Left colon (tissue), 2 donors: ENCODE measurements at regions of chr9 and their contacts with region 1.

Region 1: GRCh38 chr9:72280913-72281500 is 84.0 kb downstream of the ZFAND5 start:
- DNase-seq: peak; percentile 45 to 75
- ATAC-seq: peak; percentile 87

Region 2: DNA sequence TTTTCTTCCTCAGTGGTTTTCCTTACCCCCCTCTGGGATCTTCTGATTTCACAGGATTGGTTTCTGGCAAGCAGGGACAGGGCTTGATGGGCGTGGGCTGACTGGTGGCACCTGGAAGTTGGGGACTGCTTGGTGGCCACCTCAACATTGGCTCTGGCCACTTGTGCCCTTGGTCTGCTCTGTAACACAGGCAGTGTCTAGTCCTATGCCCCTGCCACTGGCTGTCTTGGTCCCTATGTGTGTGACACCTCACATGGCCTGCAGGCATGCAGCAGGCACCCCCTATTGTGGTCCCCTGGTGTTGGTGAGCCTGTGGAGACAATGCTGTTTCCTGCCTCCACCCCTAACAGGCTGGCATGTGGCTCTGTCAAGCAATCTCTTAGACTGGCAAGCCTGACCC is 60.4 kb before region 1 on chr9:
- intact Hi-C with region 1: no loop called
- DNase-seq: no peak
- ATAC-seq: no peak

Region 3: DNA sequence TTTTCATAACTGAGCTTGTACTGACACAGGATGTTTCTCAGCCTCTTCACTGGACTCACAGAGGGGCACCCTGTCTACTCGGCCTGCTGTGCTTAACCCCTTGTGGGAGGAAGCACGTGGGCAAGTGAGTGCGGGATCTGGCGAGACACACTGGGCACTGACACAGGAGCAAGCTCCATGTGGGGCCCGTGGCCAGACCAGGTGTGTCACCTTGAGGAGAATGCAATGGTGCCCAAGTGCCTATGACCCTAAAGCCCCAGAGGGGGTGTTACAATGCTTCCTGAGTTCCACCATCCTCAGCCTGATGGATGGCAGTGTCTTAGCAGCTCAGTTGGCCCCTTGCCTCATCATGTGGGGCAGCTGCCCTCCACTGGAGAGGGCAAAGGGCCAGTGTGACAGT is 543.0 kb after region 1 on chr9:
- intact Hi-C with region 1: loop called in 1 of 2 experiments (anchors 5 kb)
- DNase-seq: no peak
- ATAC-seq: no peak